ENCODE measurements at regions of chrX and their contacts with region 1.

Region 1: GRCh38 chrX:54352677-54353076 is 5.2 kb downstream of the WNK3 start:
- DNase-seq: no peak
- ATAC-seq: no peak
- H3K4me3 ChIP-seq: no peak overlapping the region
- H3K27ac ChIP-seq: no peak overlapping the region
- H3K4me1 ChIP-seq: no peaks in the 10 kb centered on the region
- H3K27me3 ChIP-seq: peaks cover 0 to 16% (median 0%) of the 10 kb centered on the region in 3 donors
- CTCF ChIP-seq: no peak

Region 2: DNA sequence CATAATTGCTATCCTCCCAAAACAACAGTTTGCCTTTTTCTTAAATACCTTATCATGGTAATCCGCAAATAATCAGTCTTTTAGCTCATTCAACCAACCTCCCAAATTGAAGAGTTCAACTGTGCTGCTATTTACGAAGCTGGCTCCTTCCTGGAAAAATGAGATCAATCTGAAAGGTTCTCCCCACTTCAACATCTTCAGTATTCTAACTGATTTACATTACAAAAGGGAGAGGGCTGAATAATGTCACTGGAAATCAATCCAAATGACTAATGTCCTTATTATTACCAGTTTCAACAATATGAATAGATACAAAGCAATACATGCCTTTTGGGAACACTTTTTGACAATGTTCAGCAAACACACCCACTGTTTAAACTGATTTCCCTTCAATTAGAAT is 81.0 kb before region 1 on chrX:
- intact Hi-C with region 1: loop called in 1 of 2 experiments (anchors 10 kb)
- DNase-seq: no peak
- ATAC-seq: no peak
- H3K4me3 ChIP-seq: no peak overlapping the region
- H3K27ac ChIP-seq: no peak overlapping the region
- H3K4me1 ChIP-seq: no peaks in the 10 kb centered on the region
- H3K27me3 ChIP-seq: no peaks in the 10 kb centered on the region
- CTCF ChIP-seq: no peak